Mammary epithelial cell (primary cell): ENCODE measurements at regions of chr17 and their contacts with region 1.

Region 1: DNA sequence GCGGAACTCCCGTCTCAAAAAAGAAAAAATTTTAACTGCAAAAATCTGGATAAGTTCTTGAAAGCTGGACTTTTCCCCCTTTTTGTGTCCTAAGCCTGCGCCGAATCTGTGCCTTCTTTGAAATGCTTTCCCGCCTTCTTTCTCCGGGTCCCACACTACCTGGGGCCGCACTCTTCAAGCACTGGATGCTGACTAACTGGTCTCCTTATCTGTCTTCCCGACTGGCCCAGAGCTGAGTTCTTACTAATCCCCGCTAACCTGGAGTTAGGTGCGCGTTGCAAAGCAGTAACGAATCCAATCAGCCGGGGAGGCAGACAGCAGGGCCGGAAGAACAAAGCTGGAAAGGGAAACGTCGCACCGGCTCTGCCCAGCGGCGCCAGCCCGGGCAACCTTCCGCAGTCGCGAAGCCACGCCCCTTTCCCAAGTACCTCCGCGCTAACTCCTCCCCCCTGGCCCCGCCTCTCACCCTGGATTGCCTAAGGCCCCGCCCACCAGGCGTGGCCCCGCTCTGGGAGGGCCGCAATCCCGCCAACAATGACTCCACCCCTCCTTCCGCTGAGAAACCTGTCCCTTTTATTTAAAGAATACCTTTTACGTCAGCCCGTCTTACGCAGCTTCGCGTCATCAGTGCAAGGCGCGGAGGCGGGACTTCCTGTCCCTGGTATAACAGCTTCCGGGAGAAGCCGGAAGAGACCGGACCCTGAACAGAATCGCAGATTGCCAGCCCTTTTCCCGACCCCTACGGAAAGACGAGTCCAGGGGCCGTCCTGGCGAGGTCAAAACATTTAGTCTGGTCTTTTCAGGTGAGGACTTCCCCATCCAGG is at the start of gene TMUB2:
- DNase-seq: peak; percentile 99
- H3K4me3 ChIP-seq: peak within 1 kb of the TSS; percentile 87 to 96 (median 95)
- H3K27ac ChIP-seq: peak within 1 kb of the TSS; percentile 97
- H3K4me1 ChIP-seq: peaks cover 10% of the 10 kb centered on the region
- H3K27me3 ChIP-seq: no peaks in the 10 kb centered on the region
- CTCF ChIP-seq: no peak
- total RNA-seq, gene TMUB2: 25.2 to 31.8 TPM

Region 2: DNA sequence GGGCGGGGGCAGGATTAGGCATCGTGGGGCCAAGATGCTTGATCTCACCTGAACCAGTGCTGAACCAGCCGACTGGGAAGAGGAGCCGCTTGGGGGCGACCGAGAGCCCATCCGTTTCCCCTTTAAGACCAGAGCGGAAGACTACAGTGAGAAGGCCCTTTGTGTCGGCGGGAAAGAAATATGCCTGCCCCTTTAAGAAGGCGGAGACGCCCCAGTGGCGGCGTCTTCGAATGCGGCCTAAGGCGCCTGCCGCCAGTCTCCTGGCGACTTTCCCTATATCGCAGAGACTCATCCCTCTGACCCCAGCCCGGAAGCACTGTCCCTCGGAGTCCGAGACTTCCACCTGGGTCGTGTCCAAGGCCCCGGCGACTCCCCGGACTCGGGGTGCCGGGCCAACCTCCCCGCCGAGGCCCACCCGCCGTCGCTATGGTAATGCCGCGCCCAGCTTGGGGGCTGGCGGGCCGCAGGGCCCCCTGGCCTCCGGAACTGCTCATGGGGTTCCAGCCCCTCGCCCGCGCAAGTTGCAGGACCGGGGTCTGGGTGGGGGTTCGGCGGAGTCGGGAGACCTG is 44.7 kb before region 1 on chr17 and contains the start of gene HROB:
- CTCF ChIA-PET with region 1: no interaction called
- dilution Hi-C with region 1: no loop called
- in situ Hi-C with region 1: no loop called
- intact Hi-C with region 1: loop called (anchors 1 kb)
- DNase-seq: peak; percentile 93
- H3K4me3 ChIP-seq: peak within 1 kb of the TSS; percentile 82 to 87 (median 86)
- H3K27ac ChIP-seq: peak within 1 kb of the TSS; percentile 92
- H3K4me1 ChIP-seq: peaks cover 24% of the 10 kb centered on the region
- H3K27me3 ChIP-seq: no peaks in the 10 kb centered on the region
- CTCF ChIP-seq: peak; percentile 93 to 95
- total RNA-seq, gene HROB: 3.0 to 10.3 TPM

Region 3: DNA sequence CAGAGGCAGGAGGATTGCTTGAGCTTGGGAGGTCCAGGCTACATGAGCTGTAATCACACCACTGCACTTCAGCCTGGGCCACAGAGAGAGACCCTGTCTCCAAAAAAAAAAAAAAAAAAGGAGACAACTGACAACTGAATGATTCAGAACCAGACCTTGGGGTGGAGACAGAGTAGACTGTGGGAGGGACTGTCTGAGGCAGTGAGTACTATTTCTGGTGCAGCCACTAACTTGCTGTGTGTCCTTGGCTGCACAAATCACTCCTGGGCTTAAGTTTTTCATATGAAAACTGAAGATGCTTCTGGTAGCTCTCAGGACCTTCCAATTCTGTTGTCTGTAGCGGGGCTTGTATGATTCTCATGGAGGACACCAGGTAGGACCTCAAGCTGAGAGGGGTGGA is 10.3 kb before region 1 on chr17:
- CTCF ChIA-PET with region 1: interaction called, 17 read pairs
- dilution Hi-C with region 1: no loop called
- in situ Hi-C with region 1: no loop called
- intact Hi-C with region 1: no loop called
- DNase-seq: no peak
- H3K4me3 ChIP-seq: no peak overlapping the region
- H3K27ac ChIP-seq: no peak overlapping the region
- H3K4me1 ChIP-seq: no peaks in the 10 kb centered on the region
- H3K27me3 ChIP-seq: no peaks in the 10 kb centered on the region
- CTCF ChIP-seq: no peak